MCF 10A (cell line): ENCODE measurements at regions of chr12 and their contacts with region 1.

Region 1: GRCh38 chr12:15220994-15221885 is at the start of gene RERG:
- DNase-seq: peak; percentile 82
- H3K4me3 Mint-ChIP-seq: peak within 1 kb of the TSS; percentile 80
- H3K27ac Mint-ChIP-seq: peak within 1 kb of the TSS; percentile 68
- H3K4me1 Mint-ChIP-seq: peaks cover 36% of the 10 kb centered on the region
- H3K27me3 Mint-ChIP-seq: no peaks in the 10 kb centered on the region
- CTCF ChIP-seq: peak; percentile 92
- total RNA-seq, gene RERG: 7.6 and 16.5 TPM in 2 replicates

Region 2: GRCh38 chr12:14723763-14724162 is 497.5 kb before region 1 on chr12:
- CTCF ChIA-PET with region 1: no interaction called
- POLR2A ChIA-PET with region 1: no interaction called
- intact Hi-C with region 1: loop called (anchors 5 kb)
- DNase-seq: peak; percentile 43
- H3K4me3 Mint-ChIP-seq: no peak overlapping the region
- H3K27ac Mint-ChIP-seq: no peak overlapping the region
- H3K4me1 Mint-ChIP-seq: no peaks in the 10 kb centered on the region
- H3K27me3 Mint-ChIP-seq: no peaks in the 10 kb centered on the region
- CTCF ChIP-seq: no peak

Region 3: DNA sequence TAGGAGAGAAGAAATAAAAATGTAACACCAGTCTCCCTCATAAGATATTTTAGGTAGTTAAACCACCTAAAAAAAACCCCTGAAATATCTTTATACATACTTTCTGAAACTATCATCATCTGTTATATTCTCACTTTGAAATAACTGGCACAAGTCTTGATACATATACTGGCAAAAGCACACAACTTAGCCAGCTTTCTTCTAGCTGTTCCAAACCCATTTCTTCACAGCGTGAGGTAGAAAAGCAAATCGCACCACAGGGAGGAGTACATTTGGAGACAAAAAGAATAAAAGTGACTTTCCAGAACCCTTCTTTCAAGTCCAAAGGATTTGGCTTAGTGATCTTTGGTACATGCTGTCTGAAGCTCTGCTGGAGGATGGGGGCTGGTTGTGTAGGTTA is 78.5 kb before region 1 on chr12:
- CTCF ChIA-PET with region 1: interaction called, 19 read pairs
- POLR2A ChIA-PET with region 1: interaction called, 3 read pairs
- intact Hi-C with region 1: no loop called
- DNase-seq: no peak
- H3K4me3 Mint-ChIP-seq: no peak overlapping the region
- H3K27ac Mint-ChIP-seq: no peak overlapping the region
- H3K4me1 Mint-ChIP-seq: peaks cover 8% of the 10 kb centered on the region
- H3K27me3 Mint-ChIP-seq: no peaks in the 10 kb centered on the region
- CTCF ChIP-seq: no peak

Region 4: DNA sequence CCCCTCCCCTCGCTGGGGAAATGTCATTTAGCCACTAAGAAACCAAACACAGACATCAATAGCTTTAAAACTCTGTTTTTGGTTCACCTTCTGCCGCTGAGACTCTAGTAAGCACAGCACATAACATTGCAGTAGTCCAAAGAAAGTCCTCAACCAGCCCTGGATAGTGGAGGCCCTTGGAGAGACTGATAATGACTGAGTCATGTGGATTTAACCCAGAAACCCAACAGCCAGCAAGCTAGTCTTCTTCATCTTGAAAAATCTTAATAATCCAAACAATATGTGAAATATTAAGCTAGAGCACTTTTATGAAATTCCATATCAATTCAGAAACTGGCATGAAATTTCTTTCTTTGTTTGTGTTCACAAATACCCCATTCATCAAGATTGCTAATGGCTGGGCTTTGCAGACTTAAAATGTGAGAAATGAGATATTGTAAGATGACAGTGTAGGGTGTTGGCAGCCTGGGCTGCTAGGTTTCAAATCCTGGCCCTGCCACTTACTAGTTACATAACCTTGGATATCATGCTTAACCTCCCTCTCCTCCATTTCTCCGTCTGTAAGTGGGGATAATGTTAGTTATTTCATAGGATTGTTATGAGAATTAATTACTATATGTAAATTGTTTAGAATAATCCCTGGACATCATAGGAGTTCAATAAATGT is 40.1 kb before region 1 on chr12:
- CTCF ChIA-PET with region 1: interaction called, 12 read pairs
- POLR2A ChIA-PET with region 1: interaction called, 3 read pairs
- intact Hi-C with region 1: no loop called
- DNase-seq: no peak
- H3K4me3 Mint-ChIP-seq: no peak overlapping the region
- H3K27ac Mint-ChIP-seq: no peak overlapping the region
- H3K4me1 Mint-ChIP-seq: peaks cover 11% of the 10 kb centered on the region
- H3K27me3 Mint-ChIP-seq: no peaks in the 10 kb centered on the region
- CTCF ChIP-seq: no peak

Region 5: GRCh38 chr12:15205341-15206010 is 15.8 kb before region 1 on chr12:
- CTCF ChIA-PET with region 1: interaction called, 17 read pairs
- POLR2A ChIA-PET with region 1: interaction called, 6 read pairs
- intact Hi-C with region 1: no loop called
- DNase-seq: peak; percentile 67
- H3K4me3 Mint-ChIP-seq: peak overlapping the region; percentile 19
- H3K27ac Mint-ChIP-seq: peak overlapping the region; percentile 80
- H3K4me1 Mint-ChIP-seq: peaks cover 27% of the 10 kb centered on the region
- H3K27me3 Mint-ChIP-seq: no peaks in the 10 kb centered on the region
- CTCF ChIP-seq: no peak

Region 6: DNA sequence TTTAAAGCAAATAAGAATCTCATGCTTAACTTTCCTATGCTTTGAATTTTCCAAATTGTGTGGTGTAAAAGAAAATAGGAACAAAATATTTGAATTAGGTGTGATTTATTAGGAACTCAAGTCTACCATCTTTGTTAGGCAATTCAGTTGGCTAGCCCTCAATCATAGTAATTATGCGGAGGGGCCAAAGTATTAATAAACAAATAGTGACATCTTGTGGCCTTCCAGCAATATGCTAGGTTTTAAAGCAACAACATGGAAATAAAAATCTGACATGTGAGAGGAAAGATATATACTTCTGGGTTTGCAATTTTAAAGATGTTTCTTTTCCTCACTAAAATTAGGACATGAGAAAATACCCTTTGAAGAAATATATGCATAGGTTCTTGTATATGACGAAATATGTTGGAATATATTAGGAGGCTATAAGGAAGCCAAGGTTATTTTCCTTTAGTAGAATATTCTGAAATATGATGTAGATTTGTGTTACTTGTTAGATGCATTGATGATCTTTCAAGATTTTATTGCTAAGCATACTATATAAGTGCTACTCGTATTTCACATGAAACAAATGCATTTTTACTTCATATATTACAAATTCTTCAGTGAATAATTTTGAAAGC is 301.4 kb after region 1 on chr12:
- CTCF ChIA-PET with region 1: interaction called, 19 read pairs
- POLR2A ChIA-PET with region 1: interaction called, 5 read pairs
- intact Hi-C with region 1: no loop called
- DNase-seq: peak; percentile 68
- H3K4me3 Mint-ChIP-seq: no peak overlapping the region
- H3K27ac Mint-ChIP-seq: no peak overlapping the region
- H3K4me1 Mint-ChIP-seq: peaks cover 17% of the 10 kb centered on the region
- H3K27me3 Mint-ChIP-seq: no peaks in the 10 kb centered on the region
- CTCF ChIP-seq: peak; percentile 69